ENCODE measurements at regions of chr1 and their contacts with region 1.

Region 1: DNA sequence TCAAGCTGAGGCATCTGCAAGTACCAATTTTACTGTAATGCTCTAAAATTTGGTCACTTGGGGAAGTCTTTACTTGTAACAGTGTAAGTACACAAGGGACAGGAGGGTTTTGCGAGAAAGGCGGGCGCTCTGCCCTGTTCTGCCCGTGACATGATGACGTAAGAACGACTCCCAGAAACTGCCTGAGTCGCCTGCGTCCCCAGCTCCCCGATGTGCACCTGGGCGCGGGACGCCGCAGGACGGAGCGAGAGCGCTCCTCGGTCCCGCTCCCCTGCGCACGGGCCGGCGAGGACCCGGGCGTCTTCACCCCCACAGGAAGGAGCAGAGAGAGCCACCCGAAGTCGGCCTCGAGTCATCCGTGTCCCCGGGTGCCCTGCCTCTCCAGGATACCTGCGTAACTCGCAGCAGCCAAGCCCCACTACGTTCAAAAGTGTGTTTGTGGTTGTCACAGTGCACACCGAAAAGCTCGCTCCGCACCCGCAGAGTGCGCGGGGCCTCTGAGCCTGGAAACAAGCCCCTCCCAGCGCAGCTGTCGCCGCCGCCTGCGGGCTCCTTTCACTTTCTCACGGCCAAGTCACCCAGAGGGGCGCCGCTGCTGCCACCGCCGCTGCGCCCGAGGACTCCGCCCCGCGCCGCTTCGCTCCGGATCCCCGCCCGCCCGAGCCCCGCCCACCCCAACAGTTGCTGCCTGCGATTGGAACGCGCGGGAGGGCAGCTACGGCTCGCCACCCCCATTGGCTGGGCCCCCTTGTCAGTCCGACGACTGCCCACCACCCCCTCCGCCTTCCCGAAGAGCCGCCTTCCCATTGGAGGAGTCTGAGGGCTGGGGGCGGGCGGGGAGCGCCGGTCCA is 3.2 kb upstream of the ZBTB18 start:
- DNase-seq: peak in 13 of 14 experiments; percentile 94 to 99 (median 97)
- ATAC-seq: peak; percentile 71
- H3K4me3 ChIP-seq: peak overlapping the region; percentile 96
- H3K4me3 Mint-ChIP-seq: peak overlapping the region; percentile 91
- H3K27ac ChIP-seq: peak overlapping the region; percentile 96 to 98
- H3K27ac Mint-ChIP-seq: peak overlapping the region; percentile 98
- H3K4me1 ChIP-seq: peaks cover 17% of the 10 kb centered on the region
- H3K4me1 Mint-ChIP-seq: peaks cover 29% of the 10 kb centered on the region
- H3K27me3 ChIP-seq: no peaks in the 10 kb centered on the region
- H3K27me3 Mint-ChIP-seq: no peaks in the 10 kb centered on the region
- CTCF ChIP-seq: no peak

Region 2: DNA sequence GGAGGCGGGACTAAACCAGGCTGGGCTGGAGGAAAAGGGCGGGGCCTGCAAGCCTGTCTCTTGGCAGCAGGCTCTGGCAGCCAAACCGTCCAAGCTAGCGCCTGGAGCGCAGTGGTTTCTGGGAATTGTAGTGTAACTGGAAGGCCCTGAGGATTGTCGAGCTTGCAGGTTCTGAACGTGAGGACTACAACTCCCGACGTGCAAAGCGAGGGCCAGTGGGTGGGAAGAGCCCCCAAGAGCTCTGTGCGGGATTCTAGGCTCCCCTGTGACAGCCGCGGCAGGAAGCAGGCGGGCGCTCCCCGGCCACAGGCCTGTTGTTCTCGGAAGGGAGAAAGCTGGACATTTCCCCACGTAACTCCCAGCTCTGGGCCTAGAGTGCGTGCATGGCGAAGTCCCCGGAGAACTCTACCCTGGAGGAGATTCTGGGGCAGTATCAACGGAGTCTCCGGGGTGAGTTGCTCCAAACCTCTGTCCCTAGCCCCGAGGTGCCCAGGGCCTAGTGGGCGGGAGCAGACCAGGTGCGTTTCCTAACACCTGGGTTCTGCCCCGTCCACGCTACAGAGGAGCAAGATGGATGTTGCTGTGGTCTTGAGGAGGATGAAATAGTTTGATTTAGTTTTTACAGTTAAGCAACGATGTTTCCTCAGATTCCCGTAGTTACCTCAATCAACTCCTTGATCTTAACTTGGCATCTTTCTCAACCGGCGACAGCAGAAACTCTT is 791.9 kb before region 1 on chr1 and contains the start of gene SDCCAG8:
- CTCF ChIA-PET with region 1: interaction called, 3 read pairs
- POLR2A ChIA-PET with region 1: interaction called, 31 read pairs
- intact Hi-C with region 1: loop called (anchors 2 to 10 kb)
- DNase-seq: peak; percentile 85 to 98 (median 90)
- ATAC-seq: peak; percentile 73
- H3K4me3 ChIP-seq: peak within 1 kb of the TSS; percentile 99
- H3K4me3 Mint-ChIP-seq: peak within 1 kb of the TSS; percentile 98
- H3K27ac ChIP-seq: peak within 1 kb of the TSS; percentile 97 to 99
- H3K27ac Mint-ChIP-seq: peak within 1 kb of the TSS; percentile 100
- H3K4me1 ChIP-seq: peaks cover 20% of the 10 kb centered on the region
- H3K4me1 Mint-ChIP-seq: peaks cover 61% of the 10 kb centered on the region
- H3K27me3 ChIP-seq: no peaks in the 10 kb centered on the region
- H3K27me3 Mint-ChIP-seq: no peaks in the 10 kb centered on the region
- CTCF ChIP-seq: no peak
- total RNA-seq, gene SDCCAG8: 18.3 to 21.2 TPM

Region 3: GRCh38 chr1:243850452-243851256 is 197.2 kb before region 1 on chr1:
- CTCF ChIA-PET with region 1: no interaction called
- POLR2A ChIA-PET with region 1: interaction called, 28 read pairs
- intact Hi-C with region 1: loop called (anchors 1 kb)
- DNase-seq: peak in 11 of 14 experiments; percentile 74 to 95 (median 82)
- ATAC-seq: peak; percentile 38
- H3K4me3 ChIP-seq: peak overlapping the region; percentile 64
- H3K4me3 Mint-ChIP-seq: peak overlapping the region; percentile 98
- H3K27ac ChIP-seq: peak overlapping the region; percentile 61 to 92
- H3K27ac Mint-ChIP-seq: peak overlapping the region; percentile 96
- H3K4me1 ChIP-seq: peaks cover 6% of the 10 kb centered on the region
- H3K4me1 Mint-ChIP-seq: peaks cover 40% of the 10 kb centered on the region
- H3K27me3 ChIP-seq: peaks cover 0 to 2% of the 10 kb centered on the region in 2 experiments
- H3K27me3 Mint-ChIP-seq: no peaks in the 10 kb centered on the region
- CTCF ChIP-seq: no peak

Region 4: DNA sequence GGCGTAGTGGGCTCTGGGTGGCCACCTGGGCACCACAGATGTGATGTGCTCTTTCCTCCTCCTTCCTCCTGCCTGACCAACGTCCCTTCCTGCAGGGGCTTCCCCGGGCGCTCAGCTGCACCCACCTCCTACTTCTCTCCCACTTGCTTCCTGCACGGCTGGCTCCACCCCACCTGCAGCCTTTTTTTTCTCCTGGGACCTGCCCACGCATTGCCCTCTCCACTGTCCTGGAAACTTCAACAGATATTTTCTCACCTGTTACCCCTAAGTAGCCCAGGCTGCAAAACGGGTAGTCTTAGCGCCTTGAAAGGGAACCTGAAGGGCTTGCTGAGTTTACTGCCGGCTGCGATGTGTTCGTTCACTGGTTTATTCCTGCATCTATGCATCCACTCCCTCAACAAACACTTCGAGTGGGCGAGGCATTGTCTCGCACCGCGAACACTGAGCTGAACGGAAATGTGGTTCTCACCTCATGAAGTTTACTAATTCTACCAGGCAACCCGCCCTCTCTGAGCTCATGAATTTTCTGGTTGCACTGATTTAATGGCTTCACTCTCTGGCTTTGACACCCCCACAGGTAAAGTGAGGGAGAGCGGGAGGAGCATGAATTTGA is 26.8 kb after region 1 on chr1:
- CTCF ChIA-PET with region 1: interaction called, 14 read pairs
- POLR2A ChIA-PET with region 1: interaction called, 283 read pairs
- intact Hi-C with region 1: loop called (anchors 1 to 2 kb)
- DNase-seq: peak; percentile 56 to 89 (median 68)
- ATAC-seq: peak; percentile 93
- H3K4me3 ChIP-seq: peak overlapping the region; percentile 52
- H3K4me3 Mint-ChIP-seq: peak overlapping the region; percentile 89
- H3K27ac ChIP-seq: peak overlapping the region; percentile 58 to 67
- H3K27ac Mint-ChIP-seq: peak overlapping the region; percentile 98
- H3K4me1 ChIP-seq: peaks cover 39% of the 10 kb centered on the region
- H3K4me1 Mint-ChIP-seq: peaks cover 54% of the 10 kb centered on the region
- H3K27me3 ChIP-seq: no peaks in the 10 kb centered on the region
- H3K27me3 Mint-ChIP-seq: no peaks in the 10 kb centered on the region
- CTCF ChIP-seq: no peak

Region 5: DNA sequence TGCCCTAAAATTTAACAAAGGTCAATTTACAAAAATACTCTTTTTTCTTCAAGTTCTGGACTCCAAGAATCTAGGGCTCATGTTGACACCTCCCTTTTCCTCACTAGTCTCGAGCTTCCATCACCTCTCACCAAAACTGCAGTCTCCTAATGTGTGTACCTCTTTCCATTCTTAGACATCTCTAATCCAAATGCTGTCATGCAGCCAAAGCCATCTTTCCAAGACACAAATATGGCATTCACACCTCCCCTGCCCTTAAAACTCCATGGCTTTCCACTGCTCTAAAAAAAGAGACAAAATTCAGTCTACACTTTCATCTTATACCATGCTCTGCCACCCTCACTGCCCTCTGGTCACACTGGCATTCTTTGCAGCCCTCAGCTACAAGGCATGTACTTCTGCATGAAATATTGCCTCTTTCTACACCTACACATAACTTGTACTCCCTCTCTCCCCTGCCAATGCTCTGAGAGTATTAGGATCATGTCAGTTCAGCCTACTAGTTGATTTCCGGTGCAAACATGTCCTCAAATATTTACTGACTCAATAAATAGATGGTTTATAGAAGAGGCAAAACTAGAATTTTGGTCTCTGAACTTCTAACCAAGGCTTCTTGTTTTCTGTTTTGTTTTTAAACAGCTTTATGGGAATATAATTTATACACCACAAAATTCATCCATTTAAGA is 376.9 kb after region 1 on chr1:
- CTCF ChIA-PET with region 1: no interaction called
- POLR2A ChIA-PET with region 1: no interaction called
- intact Hi-C with region 1: no loop called
- DNase-seq: no peak
- ATAC-seq: no peak
- H3K4me3 ChIP-seq: no peak overlapping the region
- H3K4me3 Mint-ChIP-seq: no peak overlapping the region
- H3K27ac ChIP-seq: no peak overlapping the region
- H3K27ac Mint-ChIP-seq: no peak overlapping the region
- H3K4me1 ChIP-seq: no peaks in the 10 kb centered on the region
- H3K4me1 Mint-ChIP-seq: peaks cover 12% of the 10 kb centered on the region
- H3K27me3 ChIP-seq: no peaks in the 10 kb centered on the region
- H3K27me3 Mint-ChIP-seq: no peaks in the 10 kb centered on the region
- CTCF ChIP-seq: no peak

Region 6: DNA sequence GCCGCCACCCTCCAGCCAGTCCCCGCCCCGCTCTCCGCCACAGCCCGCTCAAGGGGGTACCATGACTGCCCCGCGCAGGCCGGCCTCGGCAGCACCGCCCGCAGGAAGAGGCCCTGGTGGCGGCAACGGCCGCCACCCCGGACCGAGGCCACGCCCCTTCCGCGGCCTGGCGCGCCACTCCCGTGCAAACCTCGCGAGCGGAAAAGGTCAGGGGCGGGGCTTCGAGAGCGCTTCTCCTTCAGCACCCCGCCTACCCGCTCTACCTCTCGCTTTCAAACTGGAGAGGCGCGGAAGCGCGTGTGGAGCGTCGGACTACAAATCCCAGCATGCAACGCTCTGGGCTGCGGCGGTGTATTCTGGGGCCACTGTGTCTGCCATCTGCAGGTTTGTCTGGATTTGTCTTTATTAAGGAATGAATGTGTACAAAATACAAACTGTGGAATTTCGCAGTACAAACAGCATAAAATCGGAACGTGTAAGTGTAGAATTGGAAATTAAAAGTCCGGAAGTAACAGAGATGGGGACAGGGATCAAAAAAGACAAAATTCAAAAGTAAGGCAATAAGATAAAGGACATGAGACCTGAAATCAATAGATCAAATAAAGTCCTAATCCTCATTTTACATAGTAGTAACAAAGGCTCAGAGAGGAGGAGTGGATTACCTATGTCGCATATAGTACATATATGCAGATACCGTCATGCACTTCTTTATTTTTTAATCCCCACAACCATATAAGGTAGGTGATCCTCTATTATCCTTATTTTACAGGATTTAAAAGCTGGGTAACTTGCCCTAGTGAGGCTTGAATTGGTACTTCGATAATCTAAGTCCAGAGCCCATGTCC is 404.3 kb after region 1 on chr1:
- CTCF ChIA-PET with region 1: no interaction called
- POLR2A ChIA-PET with region 1: interaction called, 12 read pairs
- intact Hi-C with region 1: loop called (anchors 2 to 5 kb)
- DNase-seq: peak; percentile 97 to 100 (median 99)
- ATAC-seq: peak; percentile 83
- H3K4me3 ChIP-seq: peak overlapping the region; percentile 86
- H3K4me3 Mint-ChIP-seq: peak overlapping the region; percentile 93
- H3K27ac ChIP-seq: peak overlapping the region; percentile 16 to 96
- H3K27ac Mint-ChIP-seq: peak overlapping the region; percentile 98
- H3K4me1 ChIP-seq: peaks cover 15% of the 10 kb centered on the region
- H3K4me1 Mint-ChIP-seq: peaks cover 42% of the 10 kb centered on the region
- H3K27me3 ChIP-seq: no peaks in the 10 kb centered on the region
- H3K27me3 Mint-ChIP-seq: no peaks in the 10 kb centered on the region
- CTCF ChIP-seq: peak; percentile 45

Region 7: GRCh38 chr1:244970661-244971551 is 923.1 kb after region 1 on chr1:
- CTCF ChIA-PET with region 1: no interaction called
- POLR2A ChIA-PET with region 1: interaction called, 10 read pairs
- intact Hi-C with region 1: no loop called
- DNase-seq: peak; percentile 91 to 97 (median 93)
- ATAC-seq: peak; percentile 75
- H3K4me3 ChIP-seq: peak overlapping the region; percentile 86
- H3K4me3 Mint-ChIP-seq: peak overlapping the region; percentile 91
- H3K27ac ChIP-seq: peak overlapping the region; percentile 99 to 100
- H3K27ac Mint-ChIP-seq: peak overlapping the region; percentile 100
- H3K4me1 ChIP-seq: peaks cover 6% of the 10 kb centered on the region
- H3K4me1 Mint-ChIP-seq: peaks cover 30% of the 10 kb centered on the region
- H3K27me3 ChIP-seq: no peaks in the 10 kb centered on the region
- H3K27me3 Mint-ChIP-seq: no peaks in the 10 kb centered on the region
- CTCF ChIP-seq: peak; percentile 52